Dendritic cell treated with granulocyte-macrophage colony-stimulating factor and Interleukin-4, amounts not matched to agents 40 ng/mL and 50 ng/mL, for 4 days (primary cell): ENCODE measurements at regions of chr12 and their contacts with region 1.

Region 1: DNA sequence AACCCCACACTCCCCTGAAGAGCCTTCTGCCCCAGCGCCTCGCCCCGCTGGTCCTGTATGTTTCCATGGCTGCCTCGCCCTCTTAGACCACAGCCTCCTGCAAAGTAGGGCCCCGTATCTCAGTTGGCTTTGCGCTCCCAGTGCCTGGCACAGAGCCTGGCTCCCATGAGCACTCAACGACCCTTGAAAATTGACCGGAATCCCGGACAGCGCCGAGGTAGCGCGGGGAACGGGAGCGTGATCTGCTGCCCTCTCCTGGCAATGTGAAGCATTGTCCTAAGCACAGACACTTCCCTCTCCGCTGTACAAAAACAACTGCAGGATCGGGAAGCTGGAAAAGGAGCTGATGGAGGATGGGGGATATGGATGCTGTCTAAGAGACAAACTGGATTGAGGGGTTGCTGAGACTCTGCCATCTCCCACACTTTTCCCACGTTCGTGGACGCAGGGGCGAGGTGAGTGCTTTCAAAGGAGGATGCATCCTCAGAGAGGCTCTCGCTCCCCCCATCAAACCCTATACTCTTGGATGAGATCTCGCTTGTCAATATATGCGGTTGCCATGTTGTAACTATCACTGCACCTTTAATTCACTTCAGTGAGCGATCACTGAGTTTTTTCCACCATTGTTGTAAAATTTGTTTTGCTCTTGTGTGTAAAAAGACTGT is 10.7 kb upstream of the FKBP4 start:
- H3K4me3 Mint-ChIP-seq: peak overlapping the region; percentile 61
- H3K27ac Mint-ChIP-seq: no peak overlapping the region
- H3K4me1 Mint-ChIP-seq: peaks cover 17% of the 10 kb centered on the region
- H3K27me3 Mint-ChIP-seq: peaks cover 29% of the 10 kb centered on the region

Region 2: GRCh38 chr12:2682296-2683251 is 101.5 kb before region 1 on chr12:
- intact Hi-C with region 1: loop called (anchors 5 kb)
- H3K4me3 Mint-ChIP-seq: no peak overlapping the region
- H3K27ac Mint-ChIP-seq: no peak overlapping the region
- H3K4me1 Mint-ChIP-seq: peaks cover 7% of the 10 kb centered on the region
- H3K27me3 Mint-ChIP-seq: no peaks in the 10 kb centered on the region

Region 3: GRCh38 chr12:2756756-2757155 is 27.3 kb before region 1 on chr12:
- intact Hi-C with region 1: no loop called
- H3K4me3 Mint-ChIP-seq: no peak overlapping the region
- H3K27ac Mint-ChIP-seq: no peak overlapping the region
- H3K4me1 Mint-ChIP-seq: peaks cover 18% of the 10 kb centered on the region
- H3K27me3 Mint-ChIP-seq: peaks cover 18% of the 10 kb centered on the region